T-cell (primary cell): ENCODE measurements at regions of chr16 and their contacts with region 1.

Region 1: GRCh38 chr16:31713071-31713944 is 160.3 kb upstream of the ZNF267 start:
- DNase-seq: peak; percentile 82 to 95 (median 92)
- ATAC-seq: peak; percentile 89 to 95 (median 90)
- H3K4me3 ChIP-seq: peak overlapping the region; percentile 94 to 100
- H3K4me3 Mint-ChIP-seq: peak overlapping the region; percentile 99 to 100 (median 99)
- H3K27ac ChIP-seq: peak overlapping the region; percentile 94
- H3K27ac Mint-ChIP-seq: peak overlapping the region; percentile 98 to 99
- H3K4me1 ChIP-seq: peaks cover 16 to 52% of the 10 kb centered on the region in 2 experiments
- H3K4me1 Mint-ChIP-seq: peaks cover 59 to 64% (median 62%) of the 10 kb centered on the region in 3 donors
- H3K27me3 ChIP-seq: no peaks in the 10 kb centered on the region
- H3K27me3 Mint-ChIP-seq: no peaks in the 10 kb centered on the region

Region 2: GRCh38 chr16:31696968-31697743 is 16.2 kb before region 1 on chr16:
- CTCF ChIA-PET with region 1: interaction called in 1 of 2 experiments, 11 read pairs
- POLR2A ChIA-PET with region 1: interaction called, 4 to 7 read pairs
- DNase-seq: peak in 1 of 35 experiments; percentile 29
- ATAC-seq: no peak
- H3K4me3 ChIP-seq: no peak overlapping the region
- H3K4me3 Mint-ChIP-seq: no peak overlapping the region
- H3K27ac ChIP-seq: no peak overlapping the region
- H3K27ac Mint-ChIP-seq: no peak overlapping the region
- H3K4me1 ChIP-seq: peaks cover 20 to 31% of the 10 kb centered on the region in 2 experiments
- H3K4me1 Mint-ChIP-seq: peaks cover 14 to 34% (median 21%) of the 10 kb centered on the region in 3 donors
- H3K27me3 ChIP-seq: no peaks in the 10 kb centered on the region
- H3K27me3 Mint-ChIP-seq: no peaks in the 10 kb centered on the region